Vagina (tissue), 2 donors: ENCODE measurements at regions of chr2 and their contacts with region 1.

Region 1: GRCh38 chr2:138827426-138828054 is 47.4 kb upstream of the NXPH2 start:
- DNase-seq: no peak
- H3K4me3 ChIP-seq: no peak overlapping the region
- H3K27ac ChIP-seq: no peak overlapping the region
- H3K4me1 ChIP-seq: no peaks in the 10 kb centered on the region
- H3K27me3 ChIP-seq: no peaks in the 10 kb centered on the region
- CTCF ChIP-seq: peak; percentile 49 to 57 (median 55)
- POLR2A ChIP-seq: no peak

Region 2: GRCh38 chr2:137910641-137911040 is 916.9 kb before region 1 on chr2:
- intact Hi-C with region 1: loop called (anchors 10 kb)
- DNase-seq: no peak
- H3K4me3 ChIP-seq: no peak overlapping the region
- H3K27ac ChIP-seq: no peak overlapping the region
- H3K4me1 ChIP-seq: no peaks in the 10 kb centered on the region
- H3K27me3 ChIP-seq: no peaks in the 10 kb centered on the region
- CTCF ChIP-seq: peak; percentile 10 to 64 (median 40)
- POLR2A ChIP-seq: no peak